Heart left ventricle (tissue), 16 donors: ENCODE measurements at regions of chr6 and their contacts with region 1.

Region 1: DNA sequence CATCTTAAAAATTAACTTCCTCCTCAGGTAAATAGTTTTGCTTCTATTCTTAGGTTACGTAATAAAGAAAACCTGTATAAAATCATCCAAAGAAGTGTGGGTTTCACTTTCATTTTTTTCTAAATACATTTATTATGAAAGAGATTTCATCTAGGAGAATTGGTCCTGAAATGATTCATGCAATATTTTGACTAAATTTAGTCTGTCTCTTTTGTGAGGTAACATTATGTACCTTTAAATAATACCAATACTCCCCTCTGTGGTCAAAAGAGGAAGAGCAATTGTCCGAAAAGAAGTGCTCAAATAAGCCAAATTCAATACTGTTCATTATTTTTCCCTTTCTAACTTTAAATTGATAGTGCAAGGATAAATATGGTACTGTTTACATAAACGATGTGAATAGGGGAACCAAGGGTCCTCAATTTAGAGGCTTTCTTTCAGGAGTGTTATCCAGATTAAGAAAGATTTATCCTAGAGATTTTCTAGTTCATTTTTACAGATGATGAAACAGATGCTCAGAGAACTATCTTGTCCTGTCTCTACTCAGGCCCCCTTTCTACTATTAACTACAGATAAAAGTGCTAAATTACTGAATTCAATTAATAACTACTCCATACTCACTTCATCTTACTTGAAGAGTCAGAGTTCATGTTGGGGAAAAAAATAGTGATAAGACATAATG is 26.2 kb downstream of the CYP39A1 start:
- DNase-seq: no peak
- ATAC-seq: peak in 1 of 4 donors; percentile 59
- H3K4me3 ChIP-seq: peak overlapping the region in 2 of 12 donors; percentile 23 to 28
- H3K27ac ChIP-seq: no peak overlapping the region
- H3K4me1 ChIP-seq: peaks cover 0 to 11% (median 0%) of the 10 kb centered on the region in 12 donors
- H3K27me3 ChIP-seq: no peaks in the 10 kb centered on the region
- CTCF ChIP-seq: peak; percentile 37 to 77 (median 68)
- POLR2A ChIP-seq: no peak

Region 2: GRCh38 chr6:46080111-46080510 is 546.3 kb before region 1 on chr6:
- intact Hi-C with region 1: loop called in 2 of 10 experiments (anchors 5 to 10 kb)
- DNase-seq: no peak
- ATAC-seq: no peak
- H3K4me3 ChIP-seq: no peak overlapping the region
- H3K27ac ChIP-seq: no peak overlapping the region
- H3K4me1 ChIP-seq: no peaks in the 10 kb centered on the region
- H3K27me3 ChIP-seq: no peaks in the 10 kb centered on the region
- CTCF ChIP-seq: no peak
- POLR2A ChIP-seq: no peak

Region 3: DNA sequence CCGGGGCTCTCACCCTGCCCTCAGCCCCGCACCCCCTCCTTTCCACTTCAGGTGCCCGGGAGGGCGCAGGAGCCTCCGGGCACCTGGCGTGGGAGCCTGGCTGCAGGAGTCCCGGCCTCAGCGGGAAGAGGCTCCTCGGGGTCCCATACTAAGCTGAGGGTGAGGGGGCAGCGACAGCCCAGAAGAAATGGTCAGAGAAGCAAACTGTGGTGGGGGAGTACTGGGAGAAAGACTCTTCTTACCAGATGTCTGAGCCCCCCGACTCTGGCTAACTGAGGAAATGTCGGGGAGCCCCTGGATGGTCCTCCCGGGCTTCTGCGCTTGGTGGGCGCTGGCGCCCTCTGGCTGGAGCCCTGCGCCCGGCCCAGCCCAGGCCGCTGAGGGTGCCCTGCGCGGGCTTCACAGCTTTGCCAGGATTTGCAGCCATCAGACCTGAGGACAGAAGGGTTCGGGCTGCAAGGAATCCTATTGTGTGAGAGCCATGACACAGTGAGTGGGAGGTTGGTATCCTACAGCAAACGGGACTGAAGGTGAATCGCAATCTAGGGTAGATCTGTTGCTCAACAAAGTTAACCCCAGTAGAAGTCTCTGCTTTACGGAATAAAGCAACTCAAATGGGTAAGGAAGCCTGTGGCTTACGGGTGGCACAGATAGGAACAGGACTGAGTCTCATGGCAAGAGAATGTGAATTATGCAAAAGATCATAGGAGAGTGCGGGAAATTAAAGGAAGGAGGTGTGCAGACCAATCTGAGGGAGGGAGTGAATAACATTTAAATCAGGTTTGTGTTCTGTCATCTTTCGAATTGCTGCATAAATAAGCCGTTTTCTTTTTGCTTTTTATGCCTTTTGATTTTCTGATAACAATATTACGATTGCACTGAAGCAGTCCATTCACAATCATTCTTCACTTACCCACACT is 134.5 kb before region 1 on chr6:
- intact Hi-C with region 1: loop called in 9 of 10 experiments (anchors 2 to 10 kb)
- DNase-seq: peak; percentile 66 to 77 (median 77)
- ATAC-seq: peak; percentile 86 to 91 (median 88)
- H3K4me3 ChIP-seq: peak overlapping the region; percentile 43 to 94 (median 72)
- H3K27ac ChIP-seq: peak overlapping the region; percentile 70 to 94 (median 92)
- H3K4me1 ChIP-seq: peaks cover 0 to 37% (median 14%) of the 10 kb centered on the region in 12 donors
- H3K27me3 ChIP-seq: peaks cover 0 to 38% (median 0%) of the 10 kb centered on the region in 9 donors
- CTCF ChIP-seq: peak; percentile 53 to 90 (median 71)
- POLR2A ChIP-seq: no peak